ENCODE measurements at regions of chr14 and their contacts with region 1.

Region 1: GRCh38 chr14:25026476-25027137 is 23.3 kb downstream of the STXBP6 start:
- DNase-seq: no peak
- ATAC-seq: no peak
- H3K4me3 ChIP-seq: no peak overlapping the region
- H3K4me1 ChIP-seq: no peaks in the 10 kb centered on the region
- CTCF ChIP-seq: no peak

Region 2: DNA sequence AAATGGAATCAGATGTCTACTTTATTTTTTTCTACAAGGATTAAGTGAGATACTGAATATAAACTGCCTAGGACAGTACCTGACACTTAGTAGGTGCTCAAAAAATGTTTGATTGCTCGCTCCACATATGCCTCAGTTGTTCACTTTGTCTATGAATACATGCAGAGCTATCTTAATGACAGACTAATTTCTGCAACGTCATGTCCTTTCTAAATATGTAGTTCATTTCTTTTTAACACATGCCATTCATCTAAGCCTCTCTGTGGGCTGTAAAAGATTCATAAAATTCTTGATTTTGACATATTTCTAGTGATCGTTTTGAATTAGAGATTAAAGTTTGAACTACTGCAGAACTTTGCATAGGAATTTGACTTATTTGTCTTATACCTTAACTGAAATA is 199.6 kb after region 1 on chr14:
- intact Hi-C with region 1: loop called in 1 of 2 experiments (anchors 5 kb)
- DNase-seq: no peak
- ATAC-seq: no peak
- H3K4me3 ChIP-seq: no peak overlapping the region
- H3K4me1 ChIP-seq: no peaks in the 10 kb centered on the region
- CTCF ChIP-seq: no peak

Measured in mucosa of descending colon (tissue), 3 donors.